Gastrocnemius medialis (tissue), 4 donors: ENCODE measurements at regions of chr5 and their contacts with region 1.

Region 1: GRCh38 chr5:180071531-180072255 is at the start of gene RNF130:
- DNase-seq: peak; percentile 89 to 92
- ATAC-seq: peak; percentile 85 to 87
- H3K4me3 ChIP-seq: peak within 1 kb of the TSS; percentile 75 to 98 (median 84)
- H3K27ac ChIP-seq: peak within 1 kb of the TSS; percentile 91 to 98 (median 98)
- H3K4me1 ChIP-seq: peaks cover 9 to 32% of the 10 kb centered on the region in 2 donors
- H3K27me3 ChIP-seq: no peaks in the 10 kb centered on the region
- CTCF ChIP-seq: no peak
- POLR2A ChIP-seq: peak; percentile 58 to 67
- total RNA-seq, gene RNF130: 34.5 to 79.5 (median 55.6) TPM

Region 2: DNA sequence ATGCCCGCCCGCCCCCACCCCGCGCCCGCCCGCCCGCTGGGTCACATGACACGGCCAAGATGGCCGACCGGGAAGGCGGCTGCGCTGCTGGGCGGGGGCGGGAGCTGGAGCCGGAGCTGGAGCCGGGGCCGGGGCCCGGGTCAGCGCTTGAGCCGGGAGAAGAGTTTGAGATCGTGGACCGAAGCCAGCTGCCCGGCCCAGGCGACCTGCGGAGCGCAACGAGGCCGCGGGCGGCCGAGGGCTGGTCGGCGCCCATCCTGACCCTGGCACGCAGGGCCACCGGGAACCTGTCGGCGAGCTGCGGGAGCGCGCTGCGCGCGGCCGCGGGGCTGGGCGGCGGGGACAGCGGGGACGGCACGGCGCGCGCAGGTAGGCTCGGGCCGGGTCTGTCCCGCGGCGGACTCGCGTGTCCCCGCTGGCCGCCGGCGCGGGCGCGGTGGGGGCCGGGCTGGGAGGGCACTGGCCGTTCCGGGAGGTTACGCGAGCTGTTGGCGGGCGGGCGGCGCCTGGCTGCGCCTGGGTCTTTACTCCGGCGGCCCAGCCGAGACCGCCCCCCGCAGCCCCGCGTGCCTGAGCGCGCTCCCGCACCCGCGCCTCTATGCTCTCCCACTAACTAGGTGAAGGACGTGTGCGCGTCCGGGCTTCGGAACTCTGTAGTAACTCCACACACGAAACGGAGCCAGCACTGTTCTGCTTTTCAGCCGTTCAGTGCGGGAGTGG is 521.0 kb before region 1 on chr5 and contains the start of gene RUFY1:
- in situ Hi-C with region 1: no loop called
- intact Hi-C with region 1: loop called (anchors 5 kb)
- DNase-seq: peak; percentile 72 to 82
- ATAC-seq: peak; percentile 92
- H3K4me3 ChIP-seq: peak within 1 kb of the TSS; percentile 77 to 87 (median 80)
- H3K27ac ChIP-seq: peak within 1 kb of the TSS; percentile 87 to 97 (median 94)
- H3K4me1 ChIP-seq: peaks cover 22 to 31% of the 10 kb centered on the region in 2 donors
- H3K27me3 ChIP-seq: no peaks in the 10 kb centered on the region
- CTCF ChIP-seq: peak in 3 of 5 experiments; percentile 23 to 48 (median 42)
- POLR2A ChIP-seq: peak; percentile 87 to 94
- total RNA-seq, gene RUFY1: 19.6 to 36.3 (median 26.0) TPM